Aorta (tissue), 5 donors: ENCODE measurements at regions of chr11 and their contacts with region 1.

Region 1: GRCh38 chr11:77187776-77188632 is 60.0 kb downstream of the MYO7A start:
- DNase-seq: peak; percentile 87 to 94
- ATAC-seq: peak; percentile 83
- H3K4me3 ChIP-seq: no peak overlapping the region
- H3K27ac ChIP-seq: no peak overlapping the region
- H3K4me1 ChIP-seq: no peaks in the 10 kb centered on the region
- H3K27me3 ChIP-seq: no peaks in the 10 kb centered on the region

Region 2: DNA sequence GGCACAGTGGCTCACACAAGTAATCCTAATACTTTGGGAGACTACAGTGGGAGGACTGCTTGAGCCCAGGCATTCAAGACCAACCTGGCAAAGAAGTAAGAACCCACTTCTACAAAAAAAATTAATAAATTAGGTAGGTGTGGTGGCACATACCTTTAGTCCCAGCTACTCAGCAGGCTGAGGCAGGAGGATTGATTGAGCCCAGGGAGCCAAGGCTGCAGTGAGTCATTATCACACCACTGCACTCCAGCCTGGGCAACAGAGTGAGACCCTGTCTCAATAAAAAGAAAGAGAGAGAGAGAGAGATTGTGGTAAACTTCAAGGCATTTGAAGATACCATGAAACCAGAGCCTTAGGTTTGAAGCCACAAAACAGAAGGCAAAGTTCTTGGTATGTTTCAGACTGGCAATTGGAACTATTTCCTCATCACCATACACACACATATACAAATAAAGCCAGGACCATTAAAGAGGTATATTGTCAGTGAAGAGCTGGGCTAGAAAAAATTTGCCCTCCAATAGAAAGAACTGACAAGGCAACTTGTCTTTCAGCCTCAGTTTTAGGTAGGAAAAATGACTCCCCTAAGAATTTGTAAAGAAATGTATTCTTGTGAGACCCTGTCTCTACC is 178.4 kb before region 1 on chr11:
- intact Hi-C with region 1: no loop called
- DNase-seq: no peak
- ATAC-seq: no peak
- H3K4me3 ChIP-seq: no peak overlapping the region
- H3K27ac ChIP-seq: no peak overlapping the region
- H3K4me1 ChIP-seq: no peaks in the 10 kb centered on the region
- H3K27me3 ChIP-seq: no peaks in the 10 kb centered on the region

Region 3: GRCh38 chr11:77047007-77047927 is 140.7 kb before region 1 on chr11:
- intact Hi-C with region 1: loop called (anchors 2 kb)
- DNase-seq: peak in 1 of 2 donors; percentile 78
- ATAC-seq: peak; percentile 89
- H3K4me3 ChIP-seq: peak overlapping the region; percentile 34 to 54
- H3K27ac ChIP-seq: no peak overlapping the region
- H3K4me1 ChIP-seq: no peaks in the 10 kb centered on the region
- H3K27me3 ChIP-seq: no peaks in the 10 kb centered on the region

Region 4: DNA sequence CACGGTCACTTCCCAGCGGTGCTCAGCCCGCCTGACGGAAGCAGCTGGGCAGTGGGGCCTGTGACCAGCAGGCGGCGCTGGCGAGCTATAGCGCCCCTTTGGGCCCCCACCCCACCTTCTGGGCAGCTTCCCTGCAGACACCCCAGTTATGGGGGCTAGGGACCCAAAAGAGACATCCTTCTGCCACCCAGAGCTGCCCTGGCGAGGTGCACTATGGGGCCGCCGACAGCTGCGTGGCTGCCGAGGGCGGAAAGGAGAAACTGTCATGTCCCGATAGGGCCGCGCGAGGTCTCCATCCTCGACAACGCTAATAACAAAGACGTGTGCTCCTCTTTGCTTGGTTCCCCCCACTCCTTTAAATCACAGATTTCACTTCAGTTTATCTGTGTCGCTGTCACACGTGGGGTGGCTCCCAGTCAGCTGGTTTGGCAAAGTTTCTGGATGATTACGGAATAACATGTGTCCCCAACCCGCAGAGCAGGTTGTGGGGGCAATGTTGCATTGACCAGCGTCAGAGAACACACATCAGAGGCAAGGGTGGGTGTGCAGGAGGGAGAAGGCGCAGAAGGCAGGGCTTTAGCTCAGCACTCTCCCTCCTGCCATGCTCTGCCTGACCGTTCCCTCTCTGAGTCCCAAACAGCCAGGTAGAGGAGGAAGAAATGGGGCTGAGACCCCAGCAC is 60.6 kb before region 1 on chr11:
- intact Hi-C with region 1: loop called (anchors 1 to 2 kb)
- DNase-seq: peak; percentile 68 to 88
- ATAC-seq: peak; percentile 84
- H3K4me3 ChIP-seq: peak overlapping the region; percentile 1 to 8
- H3K27ac ChIP-seq: no peak overlapping the region
- H3K4me1 ChIP-seq: no peaks in the 10 kb centered on the region
- H3K27me3 ChIP-seq: no peaks in the 10 kb centered on the region

Region 5: GRCh38 chr11:77140231-77140851 is 47.7 kb before region 1 on chr11:
- intact Hi-C with region 1: no loop called
- DNase-seq: no peak
- ATAC-seq: peak; percentile 44
- H3K4me3 ChIP-seq: no peak overlapping the region
- H3K27ac ChIP-seq: no peak overlapping the region
- H3K4me1 ChIP-seq: no peaks in the 10 kb centered on the region
- H3K27me3 ChIP-seq: no peaks in the 10 kb centered on the region

Region 6: GRCh38 chr11:77547863-77548551 is 360.0 kb after region 1 on chr11:
- intact Hi-C with region 1: loop called in 1 of 2 experiments (anchors 5 kb)
- DNase-seq: no peak
- ATAC-seq: no peak
- H3K4me3 ChIP-seq: no peak overlapping the region
- H3K27ac ChIP-seq: no peak overlapping the region
- H3K4me1 ChIP-seq: no peaks in the 10 kb centered on the region
- H3K27me3 ChIP-seq: no peaks in the 10 kb centered on the region